ENCODE measurements at regions of chr10 and their contacts with region 1.

Region 1: GRCh38 chr10:5948999-5949759 is 28.2 kb downstream of the IL15RA start:
- DNase-seq: no peak
- ATAC-seq: peak; percentile 93
- H3K4me3 ChIP-seq: no peak overlapping the region
- H3K27ac ChIP-seq: no peak overlapping the region
- H3K4me1 ChIP-seq: no peaks in the 10 kb centered on the region
- H3K27me3 ChIP-seq: no peaks in the 10 kb centered on the region
- CTCF ChIP-seq: peak; percentile 79

Region 2: GRCh38 chr10:5805711-5806110 is 143.5 kb before region 1 on chr10:
- CTCF ChIA-PET with region 1: no interaction called
- POLR2A ChIA-PET with region 1: interaction called, 11 read pairs
- in situ Hi-C with region 1: no loop called
- intact Hi-C with region 1: no loop called
- DNase-seq: no peak
- ATAC-seq: no peak
- H3K4me3 ChIP-seq: no peak overlapping the region
- H3K27ac ChIP-seq: no peak overlapping the region
- H3K4me1 ChIP-seq: peaks cover 15% of the 10 kb centered on the region; the same call in 1 of the 2 replicates
- H3K27me3 ChIP-seq: no peaks in the 10 kb centered on the region
- CTCF ChIP-seq: no peak

Region 3: DNA sequence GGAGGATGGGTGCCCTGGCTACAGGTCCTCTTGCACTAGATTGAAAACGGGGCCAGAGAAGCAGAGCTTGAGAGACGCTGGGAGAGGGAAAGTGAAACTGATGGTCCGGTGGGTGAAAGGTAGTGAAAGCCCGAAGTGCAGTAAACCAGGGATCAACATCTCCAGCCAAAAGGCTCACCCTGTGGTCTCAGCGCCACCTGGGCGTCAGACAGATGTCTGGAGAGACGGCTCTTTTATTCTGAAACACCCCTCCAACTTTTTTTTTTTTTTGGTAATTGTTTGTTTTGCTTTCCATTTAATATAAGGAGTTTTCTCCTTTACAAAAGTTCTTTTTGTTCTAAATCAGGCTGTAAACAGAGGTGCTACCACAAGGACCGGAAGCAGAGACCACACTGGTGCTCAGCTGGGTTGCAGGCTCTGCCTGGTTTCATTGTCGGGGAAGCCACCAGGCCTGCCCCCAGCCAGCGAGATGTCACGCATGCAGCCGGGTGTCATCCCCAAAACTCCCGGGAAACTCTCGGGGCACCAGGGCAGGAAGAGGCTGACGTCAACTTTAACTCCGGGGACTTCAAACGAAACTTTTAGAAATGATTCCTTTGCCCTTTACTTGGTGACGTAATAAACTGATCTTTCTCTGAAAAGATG is 101.7 kb after region 1 on chr10:
- CTCF ChIA-PET with region 1: no interaction called
- POLR2A ChIA-PET with region 1: no interaction called
- in situ Hi-C with region 1: no loop called
- intact Hi-C with region 1: loop called (anchors 10 kb)
- DNase-seq: peak; percentile 4
- ATAC-seq: peak; percentile 85
- H3K4me3 ChIP-seq: peak overlapping the region; percentile 27 to 50
- H3K27ac ChIP-seq: no peak overlapping the region
- H3K4me1 ChIP-seq: peaks cover 3% of the 10 kb centered on the region; the same call in 1 of the 2 replicates
- H3K27me3 ChIP-seq: no peaks in the 10 kb centered on the region
- CTCF ChIP-seq: peak; percentile 56

Region 4: GRCh38 chr10:6086375-6087233 is 137.4 kb after region 1 on chr10:
- CTCF ChIA-PET with region 1: no interaction called
- POLR2A ChIA-PET with region 1: no interaction called
- in situ Hi-C with region 1: no loop called
- intact Hi-C with region 1: loop called (anchors 2 kb)
- DNase-seq: peak; percentile 53
- ATAC-seq: peak; percentile 82
- H3K4me3 ChIP-seq: peak overlapping the region in 1 of 2 experiments; percentile 17; a peak in 2 of 4 replicates
- H3K27ac ChIP-seq: no peak overlapping the region
- H3K4me1 ChIP-seq: peaks cover 15% of the 10 kb centered on the region
- H3K27me3 ChIP-seq: peaks cover 3% of the 10 kb centered on the region; the same call in 1 of the 2 replicates
- CTCF ChIP-seq: peak; percentile 92

Region 5: GRCh38 chr10:6958254-6958653 is 1009.1 kb after region 1 on chr10:
- CTCF ChIA-PET with region 1: no interaction called
- POLR2A ChIA-PET with region 1: no interaction called
- in situ Hi-C with region 1: no loop called
- intact Hi-C with region 1: no loop called
- DNase-seq: no peak
- ATAC-seq: no peak
- H3K4me3 ChIP-seq: no peak overlapping the region
- H3K27ac ChIP-seq: no peak overlapping the region
- H3K4me1 ChIP-seq: no peaks in the 10 kb centered on the region
- H3K27me3 ChIP-seq: no peaks in the 10 kb centered on the region
- CTCF ChIP-seq: no peak

Measured in Panc1 (cell line).